AG04449 (cell line): ENCODE measurements at regions of chr4 and their contacts with region 1.

Region 1: DNA sequence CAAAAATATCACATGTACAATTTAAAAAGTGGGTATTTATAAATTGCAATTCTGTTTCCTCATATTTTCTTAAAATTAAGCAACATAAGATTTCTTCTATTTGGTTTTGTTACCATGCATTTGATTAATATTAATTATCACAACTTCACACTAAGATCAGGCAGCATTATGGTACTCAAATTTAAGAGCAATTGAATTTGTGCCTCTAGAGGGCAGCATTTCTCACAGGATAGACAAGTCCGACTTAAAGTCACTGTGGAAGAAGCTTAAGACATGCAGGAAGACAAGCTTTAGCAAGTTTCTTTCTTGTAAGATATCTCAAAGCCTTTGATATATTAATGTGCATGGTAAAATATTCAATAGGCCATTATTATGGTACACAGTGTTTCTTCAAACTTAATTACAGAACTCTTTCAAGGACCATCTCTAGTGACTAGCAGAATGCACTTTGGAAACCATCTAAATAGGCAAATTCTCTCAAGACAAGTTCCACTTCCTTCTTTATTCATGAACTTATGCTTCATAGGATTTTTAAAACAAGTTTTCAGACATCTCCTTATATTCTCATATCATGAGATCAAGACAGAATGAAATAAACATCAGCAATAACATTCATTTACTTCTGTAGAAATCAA is 35.0 kb downstream of the FBXW7 start:
- DNase-seq: peak; percentile 79
- H3K4me3 ChIP-seq: no peak overlapping the region
- CTCF ChIP-seq: peak; percentile 51

Region 2: GRCh38 chr4:152454398-152455011 is 46.4 kb before region 1 on chr4:
- CTCF ChIA-PET with region 1: interaction called, 10 read pairs
- POLR2A ChIA-PET with region 1: no interaction called
- DNase-seq: no peak
- H3K4me3 ChIP-seq: no peak overlapping the region
- CTCF ChIP-seq: peak; percentile 29

Region 3: DNA sequence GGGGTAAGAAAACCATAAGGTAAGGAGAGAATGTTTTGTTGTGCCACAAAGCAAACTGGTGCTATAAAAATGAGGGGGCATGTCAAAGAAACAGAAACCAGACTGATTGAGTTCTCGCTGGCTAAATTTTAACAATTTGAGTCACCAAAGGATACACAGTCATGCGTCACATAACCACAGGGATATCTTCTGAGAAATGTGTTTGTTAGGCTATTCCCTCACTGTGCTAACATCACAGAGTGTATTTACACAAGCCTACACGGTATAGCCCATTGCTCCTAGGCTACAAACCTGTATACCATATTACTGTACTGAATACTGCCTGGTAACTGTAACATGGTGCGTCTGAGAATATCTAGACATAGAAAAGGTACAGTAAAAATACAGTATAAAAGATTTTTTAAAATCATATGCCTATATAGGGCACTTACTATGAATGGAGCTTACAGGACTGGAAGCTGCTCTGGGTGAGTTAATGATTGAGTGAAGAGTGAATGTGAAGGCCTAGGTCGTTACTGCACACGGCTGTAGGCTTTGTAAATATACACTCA is 15.1 kb before region 1 on chr4:
- CTCF ChIA-PET with region 1: interaction called, 69 read pairs
- POLR2A ChIA-PET with region 1: no interaction called
- DNase-seq: peak; percentile 56
- H3K4me3 ChIP-seq: peak overlapping the region; percentile 24
- CTCF ChIP-seq: no peak

Region 4: DNA sequence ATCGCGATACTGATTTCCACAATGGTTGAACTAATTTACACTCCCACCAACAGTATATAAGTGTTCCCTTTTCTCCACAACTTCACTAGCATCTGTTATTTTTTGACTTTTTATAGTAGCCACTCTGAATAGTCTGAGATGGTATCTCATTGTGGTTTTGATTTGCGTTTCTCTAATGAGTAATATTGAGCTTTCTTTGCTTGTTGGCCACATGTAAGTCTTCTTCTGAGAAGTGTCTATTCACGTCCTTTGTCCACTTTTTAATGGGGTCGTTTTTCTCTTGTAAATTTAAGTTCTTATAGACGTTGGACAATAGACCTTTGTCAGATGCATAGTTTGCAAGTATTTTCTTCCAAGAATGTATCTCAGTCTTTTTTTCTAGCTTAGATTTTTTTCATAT is 25.0 kb after region 1 on chr4:
- CTCF ChIA-PET with region 1: interaction called, 41 read pairs
- POLR2A ChIA-PET with region 1: no interaction called
- DNase-seq: no peak
- H3K4me3 ChIP-seq: no peak overlapping the region
- CTCF ChIP-seq: no peak

Region 5: DNA sequence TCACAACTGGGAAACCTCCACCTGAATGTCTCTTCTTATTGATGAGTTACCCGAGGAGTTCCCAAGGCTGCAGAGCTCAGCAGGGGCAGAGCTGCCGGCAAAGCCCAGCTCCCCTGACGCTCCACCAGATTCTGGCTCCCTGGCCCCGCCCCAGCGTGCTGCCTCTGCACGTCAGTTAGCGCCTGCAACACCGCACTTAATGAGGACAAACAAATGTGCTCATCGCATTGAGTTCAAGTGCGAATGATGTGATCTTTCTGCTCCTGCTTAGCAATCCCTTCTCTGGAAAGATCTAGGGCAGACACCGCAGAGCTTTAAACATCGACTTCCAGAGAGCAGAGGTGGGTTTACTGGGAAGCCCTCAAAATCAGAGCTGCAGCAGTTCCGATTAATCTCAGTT is 90.5 kb after region 1 on chr4:
- CTCF ChIA-PET with region 1: interaction called, 12 read pairs
- POLR2A ChIA-PET with region 1: no interaction called
- DNase-seq: peak; percentile 5
- H3K4me3 ChIP-seq: peak overlapping the region; percentile 13; the same call in 1 of the 2 replicates
- CTCF ChIP-seq: no peak

Region 6: DNA sequence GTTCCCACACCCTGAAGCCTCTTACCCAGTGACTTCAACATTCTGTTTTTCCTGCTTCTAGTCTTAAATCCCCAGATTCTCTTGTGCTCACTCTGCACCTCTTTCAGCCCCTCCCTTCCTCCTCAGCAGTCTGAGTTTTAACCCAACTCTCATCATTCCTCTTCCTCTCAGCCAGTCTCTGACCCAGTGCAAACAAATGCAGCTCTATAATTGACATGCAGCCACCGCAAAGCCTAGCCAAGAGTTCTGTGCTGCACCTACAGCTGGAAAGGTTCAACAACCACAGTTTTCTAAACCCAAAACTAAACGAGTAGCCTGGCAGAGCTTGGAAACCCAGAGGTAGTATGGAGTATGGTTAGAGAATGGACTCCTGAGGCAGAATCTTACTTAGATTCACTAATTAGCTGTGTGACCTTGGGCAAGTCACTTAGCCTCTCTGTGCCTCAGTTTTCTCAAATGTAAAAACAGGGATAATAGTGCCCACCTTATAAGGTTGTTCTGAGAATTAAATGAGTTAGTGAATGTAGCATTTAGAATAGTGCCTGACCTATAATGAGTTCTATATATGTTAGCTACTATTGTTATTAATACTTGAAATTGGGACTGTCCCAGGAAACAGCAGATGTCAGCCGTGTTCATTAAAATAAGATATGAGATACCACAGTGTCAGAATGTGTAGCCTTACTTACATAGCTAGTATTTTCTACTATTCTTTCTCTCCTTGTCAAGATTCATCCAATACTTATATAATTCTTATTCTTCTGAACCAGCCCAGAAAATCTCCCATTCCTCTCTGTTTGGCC is 175.3 kb after region 1 on chr4:
- CTCF ChIA-PET with region 1: interaction called, 11 read pairs
- POLR2A ChIA-PET with region 1: no interaction called
- DNase-seq: no peak
- H3K4me3 ChIP-seq: no peak overlapping the region
- CTCF ChIP-seq: no peak